Ovary (tissue), 10 donors: ENCODE measurements at regions of chr16 and their contacts with region 1.

Region 1: DNA sequence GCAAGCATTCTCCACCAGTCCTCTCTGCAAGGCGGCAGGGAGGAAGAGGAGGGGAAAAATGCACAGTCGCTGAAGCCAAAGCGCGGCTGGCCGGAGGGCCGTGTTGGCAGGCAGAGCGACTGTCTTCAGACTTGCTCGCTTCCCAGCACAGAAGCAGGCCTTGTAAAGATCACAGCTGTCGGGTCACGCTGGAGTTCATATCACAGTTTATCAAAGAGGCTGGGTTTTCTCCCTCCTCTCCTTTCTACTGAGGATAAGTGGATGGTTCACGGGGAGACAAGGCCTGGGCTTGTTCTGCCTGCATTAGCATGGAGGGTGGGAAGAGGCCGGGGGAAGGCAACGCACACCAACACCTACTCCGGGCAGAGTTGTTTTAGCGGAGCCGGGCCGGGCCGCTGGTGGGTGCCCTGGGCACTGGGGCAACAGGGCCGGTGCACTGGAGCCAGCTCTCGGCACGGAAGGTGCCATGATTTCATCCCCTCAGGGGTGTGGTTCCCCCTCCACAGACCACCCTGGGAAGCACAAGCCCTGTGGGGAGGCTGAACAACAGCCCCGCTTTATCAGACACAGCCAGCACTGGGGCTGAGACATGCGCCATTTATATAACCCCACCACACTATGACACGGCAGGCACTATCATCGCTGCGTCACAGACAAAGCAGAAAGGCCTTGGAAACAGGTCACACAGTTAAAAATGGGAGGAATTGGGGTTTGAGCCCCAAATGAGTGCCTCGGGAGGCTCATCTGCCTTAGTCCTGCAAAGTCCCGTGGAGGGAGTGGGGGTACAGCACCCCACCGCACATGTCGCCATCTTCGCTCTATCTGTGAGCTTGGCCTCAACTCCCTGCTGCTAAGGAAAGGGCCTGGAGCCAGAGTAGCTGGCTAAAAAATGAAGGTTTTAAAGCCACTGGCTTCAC is 40.3 kb upstream of the MTSS2 start:
- DNase-seq: peak in 4 of 5 donors; percentile 70 to 79 (median 72)
- H3K4me3 ChIP-seq: no peak overlapping the region
- H3K27ac ChIP-seq: peak overlapping the region; percentile 49 to 86
- H3K4me1 ChIP-seq: peaks cover 26% of the 10 kb centered on the region
- H3K27me3 ChIP-seq: no peaks in the 10 kb centered on the region
- CTCF ChIP-seq: no peak
- EP300 ChIP-seq: no peak
- POLR2A ChIP-seq: no peak

Region 2: GRCh38 chr16:70750893-70751475 is 24.8 kb after region 1 on chr16:
- intact Hi-C with region 1: loop called in 1 of 4 experiments (anchors 2 kb)
- DNase-seq: peak; percentile 73 to 87 (median 81)
- H3K4me3 ChIP-seq: no peak overlapping the region
- H3K27ac ChIP-seq: peak overlapping the region; percentile 58 to 63
- H3K4me1 ChIP-seq: peaks cover 27% of the 10 kb centered on the region
- H3K27me3 ChIP-seq: no peaks in the 10 kb centered on the region
- CTCF ChIP-seq: no peak
- EP300 ChIP-seq: no peak
- POLR2A ChIP-seq: no peak